Activated T-helper 1 cell treated with anti-CD3 and anti-CD28 coated beads, Interleukin-12 subunit alpha, Interleukin-12 subunit beta, Interleukin-2, Interleukin-4 antibody, amounts not matched to agents 30 ng/mL and 10 ng/mL and 1 ng/mL, durations not matched to agents 14 hours and 24 hours and 36 hours (primary cell): ENCODE measurements at regions of chr1 and their contacts with region 1.

Region 1: GRCh38 chr1:172895050-172895460 is 155.7 kb downstream of the TNFSF18 start:
- DNase-seq: peak; percentile 34
- H3K4me3 Mint-ChIP-seq: peak overlapping the region; percentile 28
- H3K27ac Mint-ChIP-seq: peak overlapping the region; percentile 7
- H3K4me1 Mint-ChIP-seq: peaks cover 42% of the 10 kb centered on the region
- H3K27me3 Mint-ChIP-seq: peaks cover 13% of the 10 kb centered on the region

Region 2: DNA sequence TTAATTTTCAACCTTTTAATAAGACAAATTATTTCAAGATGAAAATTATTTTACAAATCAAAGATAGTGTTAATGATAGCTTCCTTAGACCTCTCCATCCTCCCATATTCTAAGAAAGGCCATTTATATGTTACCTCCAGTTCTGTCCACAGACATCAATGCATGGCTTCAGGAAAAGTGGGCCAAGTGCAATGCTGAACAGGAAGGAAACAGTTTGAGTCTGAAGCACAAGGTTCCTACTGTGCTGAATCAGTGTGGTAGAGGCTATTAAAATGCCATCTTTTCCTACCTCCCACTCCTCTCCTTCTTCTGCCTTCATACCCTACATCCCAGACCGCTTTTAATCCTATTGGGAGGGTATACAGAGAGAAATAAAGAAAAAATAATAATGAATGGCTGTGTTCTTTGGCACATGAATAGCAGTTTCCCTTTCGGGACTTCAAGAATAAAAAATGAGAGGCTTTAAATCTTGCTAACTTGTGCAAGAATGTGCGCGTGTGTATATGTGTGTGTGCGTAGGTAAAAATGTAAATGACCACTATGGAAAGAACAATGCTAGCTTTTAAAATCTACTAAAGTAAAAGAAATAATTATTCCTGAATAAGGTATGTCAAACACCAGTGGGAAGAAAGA is 537.2 kb before region 1 on chr1:
- intact Hi-C with region 1: loop called (anchors 10 kb)
- DNase-seq: no peak
- H3K4me3 Mint-ChIP-seq: peak overlapping the region; percentile 6
- H3K27ac Mint-ChIP-seq: peak overlapping the region; percentile 83
- H3K4me1 Mint-ChIP-seq: peaks cover 56% of the 10 kb centered on the region
- H3K27me3 Mint-ChIP-seq: no peaks in the 10 kb centered on the region

Region 3: DNA sequence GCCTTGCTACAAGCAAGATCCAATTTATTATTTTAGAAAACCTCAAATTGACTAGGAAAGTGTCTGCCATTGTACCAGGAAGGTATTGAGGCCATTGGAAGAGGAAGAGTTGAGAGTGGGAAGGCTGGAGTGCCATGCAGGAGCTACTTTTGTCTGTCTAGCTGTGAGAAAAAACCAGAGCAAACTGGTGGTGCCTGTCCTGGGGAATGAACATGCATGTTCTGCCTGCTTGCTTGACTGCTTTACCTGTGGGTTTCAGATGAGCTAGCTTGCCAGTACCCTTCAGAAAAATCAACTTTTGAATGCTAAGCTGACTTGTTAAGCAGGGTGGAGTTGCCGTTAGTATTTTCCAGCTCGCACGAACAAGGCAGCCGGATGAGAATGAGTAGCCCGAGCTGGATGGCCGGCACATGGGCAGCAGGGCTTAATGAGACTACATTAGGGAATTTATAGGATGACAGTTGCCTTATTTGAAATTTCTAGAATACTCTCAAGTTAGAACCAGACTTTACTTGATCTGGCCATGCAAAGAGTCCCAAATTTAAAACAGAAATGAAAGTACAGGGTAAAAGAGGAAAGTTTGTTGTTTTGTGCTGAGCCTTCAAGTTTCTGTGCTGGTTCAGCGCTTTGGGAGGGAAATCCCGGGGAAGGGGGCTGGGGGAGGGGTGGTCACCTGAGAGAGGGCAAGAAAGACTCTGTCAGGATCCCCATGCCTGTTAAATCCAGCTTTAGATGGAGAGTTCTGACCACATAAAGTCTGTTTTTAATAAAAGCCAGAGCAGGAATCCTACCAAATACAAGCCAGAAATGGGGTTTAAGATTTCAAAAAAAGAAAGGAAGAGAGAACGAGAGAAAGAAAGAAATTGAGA is 504.1 kb before region 1 on chr1:
- intact Hi-C with region 1: no loop called
- DNase-seq: no peak
- H3K4me3 Mint-ChIP-seq: no peak overlapping the region
- H3K27ac Mint-ChIP-seq: no peak overlapping the region
- H3K4me1 Mint-ChIP-seq: peaks cover 29% of the 10 kb centered on the region
- H3K27me3 Mint-ChIP-seq: peaks cover 20% of the 10 kb centered on the region

Region 4: DNA sequence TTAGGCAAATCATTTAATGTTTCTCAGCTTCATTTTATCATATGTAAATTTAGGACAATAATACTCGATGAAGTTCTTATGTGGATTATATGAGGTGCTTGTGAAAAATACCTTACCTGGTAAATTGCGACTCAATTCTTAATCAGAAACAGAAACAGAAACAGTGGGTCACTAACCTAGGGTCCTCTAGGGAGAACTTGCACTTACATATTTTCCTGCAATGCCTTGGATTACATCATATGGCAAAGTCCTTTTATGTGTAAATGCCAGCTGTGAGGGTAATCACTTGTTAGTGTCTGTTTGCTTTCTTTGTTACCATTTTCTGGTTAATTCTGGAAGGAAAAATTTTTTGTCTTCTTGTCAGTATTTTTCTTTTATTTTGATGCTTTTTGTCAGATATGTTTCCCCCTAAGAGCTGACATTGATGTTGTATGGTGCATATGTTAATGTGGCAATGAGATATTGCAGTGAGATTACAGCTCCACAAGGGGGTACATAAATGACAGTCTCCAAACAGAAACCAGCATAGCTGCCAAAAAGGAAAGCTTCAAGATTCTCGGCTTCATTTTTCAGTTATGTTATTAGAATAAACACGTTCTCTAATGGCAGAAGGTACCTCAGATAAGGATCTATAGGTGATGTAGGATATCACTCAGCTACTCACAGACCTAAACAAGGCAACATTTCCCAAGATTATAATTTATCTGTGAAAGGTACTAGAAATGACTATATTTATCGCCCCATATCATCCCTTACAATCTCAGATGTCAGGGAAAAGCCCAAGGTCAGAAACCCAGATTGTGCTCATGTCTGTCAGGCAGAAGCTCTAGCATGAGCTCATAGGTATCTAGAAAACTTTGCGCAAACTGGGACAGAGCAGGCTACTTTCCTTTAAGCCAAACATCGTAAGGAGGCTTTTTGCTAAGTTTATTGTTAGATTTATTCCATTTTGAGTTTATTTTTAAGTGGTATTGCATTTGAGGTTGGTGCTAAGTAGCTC is 116.3 kb before region 1 on chr1:
- intact Hi-C with region 1: loop called (anchors 1 kb)
- DNase-seq: no peak
- H3K4me3 Mint-ChIP-seq: no peak overlapping the region
- H3K27ac Mint-ChIP-seq: no peak overlapping the region
- H3K4me1 Mint-ChIP-seq: peaks cover 11% of the 10 kb centered on the region
- H3K27me3 Mint-ChIP-seq: peaks cover 21% of the 10 kb centered on the region

Region 5: DNA sequence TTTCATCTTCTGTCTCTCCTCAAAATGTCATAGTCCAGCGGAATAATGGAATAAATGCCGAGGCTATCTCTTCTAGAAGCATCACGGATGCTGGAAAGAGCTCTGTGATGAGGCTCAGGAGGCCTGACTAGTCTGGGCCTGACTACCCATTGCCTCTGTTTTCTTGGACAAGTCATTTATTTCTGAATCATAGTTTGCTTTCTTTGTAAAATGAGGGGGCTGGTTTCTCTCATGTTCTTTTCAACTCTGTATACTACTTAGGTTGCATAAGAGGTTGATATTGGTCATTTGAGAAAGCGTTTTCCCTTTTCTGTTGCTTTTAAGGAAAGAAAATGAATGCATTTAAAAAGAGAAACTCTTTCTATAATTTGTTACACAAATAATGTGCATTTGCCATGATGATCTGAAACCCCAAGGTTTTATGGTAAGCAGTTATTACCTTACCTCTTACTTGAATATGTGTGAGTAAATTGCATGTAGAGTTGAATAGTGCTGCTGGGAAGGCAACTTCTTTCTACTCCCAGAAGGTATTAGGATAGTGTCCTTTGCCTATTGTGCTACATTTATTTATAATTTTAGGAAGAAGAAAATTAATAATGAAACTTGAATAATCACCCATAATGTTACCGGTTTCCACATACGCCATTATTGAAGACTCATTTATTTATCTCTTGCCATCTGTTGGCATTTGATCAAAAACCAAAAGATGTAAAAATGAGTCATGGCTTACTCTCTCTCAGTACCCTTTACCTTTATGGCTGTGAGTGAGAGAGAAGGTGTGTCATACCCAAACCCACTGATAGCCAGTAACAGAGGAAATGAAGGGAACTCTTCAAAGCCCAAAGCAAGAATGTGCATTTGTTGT is 57.0 kb before region 1 on chr1:
- intact Hi-C with region 1: loop called (anchors 1 kb)
- DNase-seq: peak; percentile 29
- H3K4me3 Mint-ChIP-seq: no peak overlapping the region
- H3K27ac Mint-ChIP-seq: peak overlapping the region; percentile 26
- H3K4me1 Mint-ChIP-seq: peaks cover 46% of the 10 kb centered on the region
- H3K27me3 Mint-ChIP-seq: peaks cover 65% of the 10 kb centered on the region

Region 6: DNA sequence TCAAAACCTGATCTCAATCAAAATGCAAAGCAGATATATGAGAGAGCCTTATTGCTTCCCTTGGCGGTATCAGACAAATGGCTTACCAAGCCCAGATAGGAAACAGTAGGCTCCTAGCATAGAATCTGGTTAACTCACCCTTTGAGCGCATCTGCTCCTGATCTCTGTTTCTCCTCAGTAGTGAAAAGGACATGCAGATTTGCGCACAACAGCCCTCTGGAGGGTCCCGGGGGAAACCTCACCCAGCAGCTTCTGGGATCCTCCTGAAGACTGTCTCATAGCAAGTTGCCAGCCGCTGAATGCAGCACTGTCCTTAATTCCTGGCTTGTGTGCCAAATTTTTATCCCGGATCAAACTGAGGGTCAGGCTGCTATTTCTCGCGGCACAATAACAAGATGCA is 44.0 kb before region 1 on chr1:
- intact Hi-C with region 1: no loop called
- DNase-seq: no peak
- H3K4me3 Mint-ChIP-seq: no peak overlapping the region
- H3K27ac Mint-ChIP-seq: no peak overlapping the region
- H3K4me1 Mint-ChIP-seq: peaks cover 9% of the 10 kb centered on the region
- H3K27me3 Mint-ChIP-seq: peaks cover 43% of the 10 kb centered on the region

Region 7: GRCh38 chr1:172870901-172871606 is 24.0 kb before region 1 on chr1:
- intact Hi-C with region 1: loop called (anchors 1 kb)
- DNase-seq: no peak
- H3K4me3 Mint-ChIP-seq: no peak overlapping the region
- H3K27ac Mint-ChIP-seq: no peak overlapping the region
- H3K4me1 Mint-ChIP-seq: peaks cover 32% of the 10 kb centered on the region
- H3K27me3 Mint-ChIP-seq: peaks cover 39% of the 10 kb centered on the region

Region 8: GRCh38 chr1:172906778-172907592 is 11.9 kb after region 1 on chr1:
- intact Hi-C with region 1: no loop called
- DNase-seq: no peak
- H3K4me3 Mint-ChIP-seq: no peak overlapping the region
- H3K27ac Mint-ChIP-seq: peak overlapping the region; percentile 13
- H3K4me1 Mint-ChIP-seq: peaks cover 9% of the 10 kb centered on the region
- H3K27me3 Mint-ChIP-seq: peaks cover 23% of the 10 kb centered on the region

Region 9: GRCh38 chr1:172935062-172935592 is 40.1 kb after region 1 on chr1:
- intact Hi-C with region 1: loop called (anchors 2 kb)
- DNase-seq: no peak
- H3K4me3 Mint-ChIP-seq: no peak overlapping the region
- H3K27ac Mint-ChIP-seq: no peak overlapping the region
- H3K4me1 Mint-ChIP-seq: peaks cover 14% of the 10 kb centered on the region
- H3K27me3 Mint-ChIP-seq: peaks cover 8% of the 10 kb centered on the region

Region 10: GRCh38 chr1:173202430-173203145 is 307.5 kb after region 1 on chr1:
- intact Hi-C with region 1: loop called (anchors 2 kb)
- DNase-seq: no peak
- H3K4me3 Mint-ChIP-seq: no peak overlapping the region
- H3K27ac Mint-ChIP-seq: no peak overlapping the region
- H3K4me1 Mint-ChIP-seq: peaks cover 47% of the 10 kb centered on the region
- H3K27me3 Mint-ChIP-seq: peaks cover 16% of the 10 kb centered on the region